ENCODE measurements at regions of chr11 and their contacts with region 1.

Region 1: GRCh38 chr11:1832211-1832919 is 2.4 kb upstream of the SYT8 start:
- DNase-seq: peak; percentile 95
- H3K4me3 ChIP-seq: no peak overlapping the region; a peak in 1 of 4 replicates
- H3K27ac ChIP-seq: no peak overlapping the region; a peak in 1 of 4 replicates
- H3K4me1 ChIP-seq: peaks cover 6 to 65% of the 10 kb centered on the region in 2 experiments; a peak in 3 of 4 replicates
- H3K27me3 ChIP-seq: no peaks in the 10 kb centered on the region
- CTCF ChIP-seq: peak; percentile 91
- EP300 ChIP-seq: no peak
- RAD21 ChIP-seq: peak; percentile 75

Region 2: DNA sequence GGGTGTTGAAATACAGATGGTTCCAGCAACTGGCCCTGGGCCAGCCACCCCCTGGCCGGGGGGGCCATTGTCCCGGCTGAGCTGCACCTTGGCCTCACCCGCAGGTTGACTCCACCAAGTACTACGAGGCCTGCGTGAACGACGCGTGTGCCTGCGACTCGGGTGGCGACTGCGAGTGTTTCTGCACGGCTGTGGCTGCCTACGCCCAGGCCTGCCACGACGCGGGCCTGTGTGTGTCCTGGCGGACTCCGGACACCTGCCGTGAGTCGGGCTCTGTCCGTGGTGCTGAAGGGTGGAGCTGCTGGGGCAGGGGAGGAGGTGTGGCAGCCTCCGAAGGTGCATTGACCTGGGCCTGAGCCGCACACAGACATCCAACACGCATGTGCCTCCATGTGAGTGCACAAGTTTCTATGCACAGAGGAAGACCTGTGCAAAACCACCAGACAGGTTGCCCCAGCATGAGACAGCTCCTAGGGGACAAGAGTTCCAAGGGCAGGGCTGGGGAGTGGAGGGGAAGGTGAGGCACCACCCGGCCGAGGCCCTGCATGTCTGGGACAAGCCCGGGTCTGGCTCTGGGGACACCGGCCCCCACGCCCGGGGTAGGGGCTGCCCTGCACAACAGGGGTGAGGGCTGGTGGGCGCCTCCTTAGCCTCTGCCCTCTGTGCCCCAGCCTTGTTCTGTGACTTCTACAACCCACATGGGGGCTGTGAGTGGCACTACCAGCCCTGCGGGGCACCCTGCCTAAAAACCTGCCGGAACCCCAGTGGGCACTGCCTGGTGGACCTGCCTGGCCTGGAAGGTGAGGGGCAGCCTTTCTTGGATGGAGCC is 593.4 kb before region 1 on chr11:
- CTCF ChIA-PET with region 1: no interaction called
- POLR2A ChIA-PET with region 1: no interaction called
- DNase-seq: no peak
- H3K4me3 ChIP-seq: no peak overlapping the region
- H3K27ac ChIP-seq: no peak overlapping the region
- H3K4me1 ChIP-seq: no peaks in the 10 kb centered on the region
- H3K27me3 ChIP-seq: no peaks in the 10 kb centered on the region
- CTCF ChIP-seq: no peak
- EP300 ChIP-seq: no peak
- RAD21 ChIP-seq: no peak

Region 3: DNA sequence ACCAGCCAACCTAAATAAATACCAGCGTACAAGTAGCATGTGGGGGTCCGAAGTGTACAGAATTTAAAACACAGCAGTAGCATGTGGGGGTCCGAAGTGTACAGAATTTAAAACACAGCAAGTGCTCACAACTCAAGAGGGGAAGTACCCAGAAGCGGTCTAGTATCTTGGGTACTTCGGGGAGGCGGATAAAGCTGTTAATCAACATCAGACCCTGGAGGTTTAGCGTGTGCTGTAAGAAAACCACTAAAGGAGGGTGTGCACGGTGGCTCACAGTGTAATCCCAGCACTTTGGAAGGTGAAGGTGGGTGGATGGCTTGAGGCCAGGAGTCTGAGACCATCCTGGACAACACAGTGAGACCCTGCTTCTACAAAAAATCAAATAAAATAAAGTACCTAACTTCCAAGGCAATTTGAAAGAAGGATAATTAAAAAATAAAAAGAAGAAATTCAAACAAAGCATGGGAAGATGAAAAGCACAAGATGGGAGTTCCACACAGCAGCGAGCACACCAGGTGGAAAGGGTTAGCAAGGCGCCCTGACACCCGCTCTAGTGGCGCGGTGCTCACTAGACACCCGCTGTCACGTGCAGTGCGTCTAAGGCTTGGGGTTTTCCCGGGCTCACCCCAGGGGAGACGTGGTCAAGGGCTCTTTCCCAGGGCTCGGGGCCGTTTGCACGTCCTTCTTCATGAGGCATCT is 310.8 kb before region 1 on chr11:
- CTCF ChIA-PET with region 1: no interaction called
- POLR2A ChIA-PET with region 1: no interaction called
- DNase-seq: no peak
- H3K4me3 ChIP-seq: no peak overlapping the region
- H3K27ac ChIP-seq: no peak overlapping the region
- H3K4me1 ChIP-seq: peaks cover 0 to 2% of the 10 kb centered on the region in 2 experiments; a peak in 1 of 4 replicates
- H3K27me3 ChIP-seq: no peaks in the 10 kb centered on the region
- CTCF ChIP-seq: no peak
- EP300 ChIP-seq: no peak
- RAD21 ChIP-seq: no peak

Region 4: GRCh38 chr11:1546536-1547400 is 285.6 kb before region 1 on chr11:
- CTCF ChIA-PET with region 1: interaction called, 10 read pairs
- POLR2A ChIA-PET with region 1: no interaction called
- DNase-seq: peak; percentile 97
- H3K4me3 ChIP-seq: peak overlapping the region; percentile 37 to 49; a peak in 3 of 4 replicates
- H3K27ac ChIP-seq: no peak overlapping the region
- H3K4me1 ChIP-seq: peaks cover 0 to 6% of the 10 kb centered on the region in 2 experiments; a peak in 1 of 4 replicates
- H3K27me3 ChIP-seq: peaks cover 12% of the 10 kb centered on the region
- CTCF ChIP-seq: peak; percentile 72
- EP300 ChIP-seq: no peak
- RAD21 ChIP-seq: peak; percentile 76

Region 5: GRCh38 chr11:1701091-1701807 is 131.1 kb before region 1 on chr11:
- CTCF ChIA-PET with region 1: interaction called, 72 read pairs
- POLR2A ChIA-PET with region 1: interaction called, 3 read pairs
- DNase-seq: no peak
- H3K4me3 ChIP-seq: no peak overlapping the region
- H3K27ac ChIP-seq: no peak overlapping the region
- H3K4me1 ChIP-seq: no peaks in the 10 kb centered on the region
- H3K27me3 ChIP-seq: no peaks in the 10 kb centered on the region; the same call in 1 of the 2 replicates
- CTCF ChIP-seq: no peak
- EP300 ChIP-seq: no peak
- RAD21 ChIP-seq: no peak

Region 6: DNA sequence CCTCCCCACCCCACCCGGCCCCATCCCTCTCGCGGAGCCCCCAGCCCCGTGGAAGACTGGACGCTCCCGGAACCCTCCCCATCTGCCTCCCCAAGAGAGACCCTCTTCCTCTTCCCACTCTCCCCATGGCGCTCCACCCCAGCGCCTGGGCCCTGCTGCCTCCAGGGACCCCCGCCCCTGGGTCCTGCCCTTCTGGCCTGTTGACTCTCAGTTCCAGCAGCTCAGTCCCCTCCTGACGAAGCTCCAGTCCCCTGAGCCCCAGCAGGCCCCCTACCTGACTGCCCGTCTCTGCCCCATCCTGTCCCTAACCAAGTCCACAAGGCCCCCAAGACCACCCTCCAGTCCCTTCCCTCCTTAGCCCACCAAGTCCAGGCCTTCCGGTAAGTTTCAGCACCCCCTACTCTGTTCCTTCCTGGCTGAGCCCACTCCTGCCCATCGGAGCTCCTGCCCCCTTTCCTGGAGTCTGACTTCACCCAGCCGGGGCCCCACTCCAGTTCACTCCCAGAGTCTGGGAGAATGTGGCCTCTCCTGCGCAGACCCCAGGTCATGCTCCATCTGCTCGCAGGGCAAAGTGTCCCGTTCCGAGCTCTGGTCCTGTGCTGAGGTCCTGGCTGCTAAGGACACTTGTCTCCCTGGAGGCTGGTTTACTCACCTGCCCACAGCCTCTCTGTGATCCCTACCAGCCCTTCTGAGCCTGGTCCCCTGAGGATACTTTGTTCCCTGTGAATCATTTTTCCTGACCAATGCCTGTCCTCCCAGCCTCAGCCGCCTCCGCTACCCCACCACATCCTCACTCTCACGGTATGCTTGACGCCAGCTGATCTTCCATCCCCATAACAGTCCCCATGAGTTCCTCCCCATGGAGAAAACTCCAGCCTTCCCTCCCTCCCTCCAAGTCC is 82.7 kb before region 1 on chr11:
- CTCF ChIA-PET with region 1: interaction called, 25 read pairs
- POLR2A ChIA-PET with region 1: interaction called, 3 read pairs
- DNase-seq: no peak
- H3K4me3 ChIP-seq: peak overlapping the region in 1 of 2 experiments; percentile 50; a peak in 2 of 4 replicates
- H3K27ac ChIP-seq: peak overlapping the region in 1 of 2 experiments; percentile 92; a peak in 1 of 4 replicates
- H3K4me1 ChIP-seq: peaks cover 0 to 79% of the 10 kb centered on the region in 2 experiments; a peak in 1 of 4 replicates
- H3K27me3 ChIP-seq: no peaks in the 10 kb centered on the region
- CTCF ChIP-seq: no peak
- EP300 ChIP-seq: no peak
- RAD21 ChIP-seq: no peak

Region 7: DNA sequence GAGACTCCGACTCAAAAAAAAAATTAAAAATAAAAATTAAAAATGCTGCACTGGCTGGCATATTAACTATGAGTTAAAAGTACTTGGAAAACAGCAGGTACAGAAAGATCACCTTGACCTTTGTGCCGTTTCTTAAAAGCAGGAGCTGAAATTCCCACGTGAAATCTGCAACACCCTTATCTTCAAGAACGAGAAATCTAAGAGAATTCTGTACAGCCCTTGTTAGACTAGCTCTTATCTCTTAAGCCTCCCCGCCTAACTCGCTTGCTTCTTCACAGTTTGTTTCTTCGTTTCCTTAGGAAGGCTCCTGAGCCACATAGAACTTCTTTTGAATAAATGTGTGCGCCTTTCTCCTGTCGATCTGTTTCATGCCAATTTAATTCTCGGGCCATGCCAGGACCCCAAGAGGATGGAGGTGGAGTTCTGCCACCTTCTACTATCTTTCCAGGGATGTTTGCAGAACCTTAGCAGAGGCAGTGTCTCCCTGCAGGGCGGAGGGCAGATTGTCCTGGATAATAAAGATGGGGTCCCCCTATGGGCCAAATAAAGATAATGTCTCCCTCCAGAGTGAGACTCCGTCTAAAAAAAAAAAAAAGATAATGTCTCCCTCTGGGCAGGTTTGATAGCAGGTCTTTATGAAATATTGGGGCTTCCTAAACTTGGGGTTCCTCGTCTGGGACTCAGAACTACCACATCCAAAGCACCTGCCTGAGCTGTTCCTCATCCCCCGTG is 24.9 kb before region 1 on chr11:
- CTCF ChIA-PET with region 1: interaction called, 10 read pairs
- POLR2A ChIA-PET with region 1: no interaction called
- DNase-seq: no peak
- H3K4me3 ChIP-seq: no peak overlapping the region
- H3K27ac ChIP-seq: no peak overlapping the region
- H3K4me1 ChIP-seq: no peaks in the 10 kb centered on the region
- H3K27me3 ChIP-seq: no peaks in the 10 kb centered on the region; the same call in 1 of the 2 replicates
- CTCF ChIP-seq: no peak; the same call in 1 of the 2 replicates
- EP300 ChIP-seq: no peak
- RAD21 ChIP-seq: no peak

Region 8: GRCh38 chr11:1876361-1877063 is 44.1 kb after region 1 on chr11:
- CTCF ChIA-PET with region 1: interaction called, 15 read pairs
- POLR2A ChIA-PET with region 1: interaction called, 4 read pairs
- DNase-seq: peak; percentile 86
- H3K4me3 ChIP-seq: no peak overlapping the region; a peak in 1 of 4 replicates
- H3K27ac ChIP-seq: peak overlapping the region; percentile 28 to 78; a peak in 2 of 4 replicates
- H3K4me1 ChIP-seq: peaks cover 0 to 46% of the 10 kb centered on the region in 2 experiments; a peak in 2 of 4 replicates
- H3K27me3 ChIP-seq: no peaks in the 10 kb centered on the region
- CTCF ChIP-seq: peak; percentile 51
- EP300 ChIP-seq: no peak; a peak in 1 of 4 replicates
- RAD21 ChIP-seq: no peak

Region 9: DNA sequence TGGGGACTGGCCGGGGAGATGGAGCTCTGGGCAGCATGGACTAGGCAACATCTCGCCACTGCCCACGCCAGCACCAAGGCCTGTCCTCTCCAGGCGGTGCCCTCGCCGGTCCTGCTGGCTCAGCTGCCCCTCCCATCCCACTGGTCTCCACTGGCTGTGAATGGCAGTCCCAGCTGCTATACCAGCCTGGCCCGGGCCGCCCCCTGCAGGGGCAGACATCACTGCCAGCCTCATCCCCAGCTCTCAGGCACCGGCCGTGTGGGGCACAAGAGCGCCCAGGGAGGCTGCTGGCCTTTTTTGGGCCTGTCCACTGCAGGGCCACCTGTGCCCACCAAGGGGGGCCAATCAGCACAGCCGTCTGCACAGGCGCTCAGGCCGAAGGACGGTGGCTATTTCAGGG is 195.3 kb after region 1 on chr11:
- CTCF ChIA-PET with region 1: no interaction called
- POLR2A ChIA-PET with region 1: no interaction called
- DNase-seq: no peak
- H3K4me3 ChIP-seq: no peak overlapping the region
- H3K27ac ChIP-seq: no peak overlapping the region
- H3K4me1 ChIP-seq: no peaks in the 10 kb centered on the region
- H3K27me3 ChIP-seq: no peaks in the 10 kb centered on the region
- CTCF ChIP-seq: no peak
- EP300 ChIP-seq: no peak
- RAD21 ChIP-seq: no peak